Dendritic cell treated with granulocyte-macrophage colony-stimulating factor and Interleukin-4, amounts not matched to agents 40 ng/mL and 50 ng/mL, for 4 days (primary cell): ENCODE measurements at regions of chr12 and their contacts with region 1.

Region 1: GRCh38 chr12:66087365-66087943 is 43.1 kb downstream of the LLPH start:
- H3K4me3 Mint-ChIP-seq: no peak overlapping the region
- H3K27ac Mint-ChIP-seq: no peak overlapping the region
- H3K4me1 Mint-ChIP-seq: peaks cover 7% of the 10 kb centered on the region
- H3K27me3 Mint-ChIP-seq: no peaks in the 10 kb centered on the region

Region 2: GRCh38 chr12:65306366-65307168 is 780.9 kb before region 1 on chr12:
- intact Hi-C with region 1: loop called (anchors 5 kb)
- H3K4me3 Mint-ChIP-seq: peak overlapping the region; percentile 49
- H3K27ac Mint-ChIP-seq: no peak overlapping the region
- H3K4me1 Mint-ChIP-seq: peaks cover 23% of the 10 kb centered on the region
- H3K27me3 Mint-ChIP-seq: no peaks in the 10 kb centered on the region

Region 3: GRCh38 chr12:65556681-65557437 is 530.6 kb before region 1 on chr12:
- intact Hi-C with region 1: loop called (anchors 5 kb)
- H3K4me3 Mint-ChIP-seq: no peak overlapping the region
- H3K27ac Mint-ChIP-seq: no peak overlapping the region
- H3K4me1 Mint-ChIP-seq: peaks cover 7% of the 10 kb centered on the region
- H3K27me3 Mint-ChIP-seq: no peaks in the 10 kb centered on the region

Region 4: DNA sequence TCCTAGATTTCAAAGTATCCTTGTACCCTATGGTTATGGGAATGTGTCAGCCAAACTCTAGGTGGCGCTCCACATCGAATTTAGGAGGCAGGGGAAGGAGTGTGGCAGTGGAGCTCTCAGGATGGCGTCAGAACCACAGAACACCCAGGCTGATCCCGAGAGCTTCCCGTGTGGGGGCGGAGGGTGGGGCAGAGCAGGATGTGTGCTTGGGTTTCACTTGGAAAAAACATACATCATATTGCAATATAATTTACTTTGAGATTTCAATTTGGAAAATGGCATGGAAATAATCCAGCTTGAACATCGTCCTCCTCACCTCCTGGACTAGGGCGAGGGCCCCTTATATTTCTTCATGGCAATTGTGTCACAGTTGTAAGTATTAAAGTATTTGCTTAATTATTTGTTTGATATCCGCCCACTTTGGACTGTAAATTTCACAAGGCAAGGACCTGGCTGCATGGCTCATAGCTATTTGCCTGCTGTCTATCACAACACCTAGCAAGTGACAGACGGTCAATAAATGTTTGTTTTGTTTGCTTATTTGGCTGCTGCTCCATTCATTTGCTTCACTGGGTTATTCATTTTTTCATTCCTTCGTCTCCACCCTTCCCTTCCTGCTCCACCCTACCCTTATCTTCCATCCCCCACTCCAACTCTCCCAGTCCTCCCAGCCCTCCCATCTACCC is 484.7 kb before region 1 on chr12:
- intact Hi-C with region 1: loop called (anchors 1 kb)
- H3K4me3 Mint-ChIP-seq: no peak overlapping the region
- H3K27ac Mint-ChIP-seq: no peak overlapping the region
- H3K4me1 Mint-ChIP-seq: no peaks in the 10 kb centered on the region
- H3K27me3 Mint-ChIP-seq: peaks cover 13% of the 10 kb centered on the region

Region 5: GRCh38 chr12:65911321-65911720 is 176.1 kb before region 1 on chr12:
- intact Hi-C with region 1: no loop called
- H3K4me3 Mint-ChIP-seq: no peak overlapping the region
- H3K27ac Mint-ChIP-seq: no peak overlapping the region
- H3K4me1 Mint-ChIP-seq: peaks cover 24% of the 10 kb centered on the region
- H3K27me3 Mint-ChIP-seq: no peaks in the 10 kb centered on the region

Region 6: GRCh38 chr12:65986047-65986446 is 101.4 kb before region 1 on chr12:
- intact Hi-C with region 1: loop called (anchors 5 kb)
- H3K4me3 Mint-ChIP-seq: no peak overlapping the region
- H3K27ac Mint-ChIP-seq: no peak overlapping the region
- H3K4me1 Mint-ChIP-seq: no peaks in the 10 kb centered on the region
- H3K27me3 Mint-ChIP-seq: no peaks in the 10 kb centered on the region